ENCODE measurements at regions of chr1 and their contacts with region 1.

Region 1: GRCh38 chr1:12244078-12244477 is 14.2 kb downstream of the VPS13D start:
- DNase-seq: peak; percentile 30
- ATAC-seq: no peak
- H3K4me3 ChIP-seq: no peak overlapping the region
- H3K4me3 Mint-ChIP-seq: no peak overlapping the region
- H3K27ac ChIP-seq: no peak overlapping the region
- H3K27ac Mint-ChIP-seq: no peak overlapping the region
- H3K4me1 ChIP-seq: no peaks in the 10 kb centered on the region
- H3K4me1 Mint-ChIP-seq: no peaks in the 10 kb centered on the region
- H3K27me3 ChIP-seq: no peaks in the 10 kb centered on the region
- H3K27me3 Mint-ChIP-seq: no peaks in the 10 kb centered on the region
- CTCF ChIP-seq: peak; percentile 31

Region 2: DNA sequence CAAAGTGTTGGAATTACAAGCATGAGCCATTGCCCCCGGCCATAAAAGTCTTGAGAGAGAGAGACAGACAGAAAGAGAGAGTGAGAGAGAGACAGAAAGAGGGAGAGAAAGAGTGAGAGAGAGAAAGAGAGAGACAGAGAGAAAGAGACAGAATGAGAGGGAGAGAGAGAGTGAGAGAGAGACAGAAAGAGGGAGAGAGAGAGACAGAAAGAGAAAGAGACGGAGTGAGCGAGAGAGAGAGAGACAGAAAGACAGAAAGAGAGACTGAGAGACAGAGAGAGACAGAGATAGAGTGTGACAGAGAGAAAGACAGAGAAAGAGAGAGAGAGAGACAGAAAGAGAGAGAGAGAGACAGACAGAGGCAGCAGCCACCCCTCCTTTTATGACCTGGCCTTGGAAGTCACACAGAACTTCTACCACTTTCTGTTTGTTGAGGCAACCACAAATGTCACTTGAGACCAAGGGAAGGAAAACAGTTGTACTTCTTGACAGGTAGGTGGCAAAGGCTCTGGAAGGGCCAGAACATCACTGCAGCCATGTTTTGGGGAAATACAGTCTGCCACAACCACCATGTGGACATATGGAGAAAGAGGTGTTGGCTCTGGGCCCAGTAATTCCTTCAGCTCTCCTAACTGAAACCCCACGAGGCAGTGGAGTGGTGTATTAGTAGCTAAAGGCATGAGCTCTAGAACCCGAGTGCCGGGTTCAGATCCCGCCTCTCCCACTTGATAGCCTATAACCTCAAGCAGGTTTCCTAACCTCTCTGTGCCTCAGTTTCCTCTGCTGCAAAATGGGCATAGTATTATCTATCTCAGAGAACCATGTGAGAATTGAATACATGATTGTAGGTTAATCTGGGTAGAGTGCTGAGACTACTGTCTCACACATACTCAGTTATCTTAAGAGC is 130.4 kb before region 1 on chr1:
- CTCF ChIA-PET with region 1: interaction called, 128 read pairs
- POLR2A ChIA-PET with region 1: no interaction called
- intact Hi-C with region 1: loop called (anchors 1 kb)
- DNase-seq: no peak
- ATAC-seq: no peak
- H3K4me3 ChIP-seq: no peak overlapping the region
- H3K4me3 Mint-ChIP-seq: no peak overlapping the region
- H3K27ac ChIP-seq: no peak overlapping the region
- H3K27ac Mint-ChIP-seq: no peak overlapping the region
- H3K4me1 ChIP-seq: no peaks in the 10 kb centered on the region
- H3K4me1 Mint-ChIP-seq: no peaks in the 10 kb centered on the region
- H3K27me3 ChIP-seq: no peaks in the 10 kb centered on the region
- H3K27me3 Mint-ChIP-seq: no peaks in the 10 kb centered on the region
- CTCF ChIP-seq: no peak

Region 3: GRCh38 chr1:12229835-12230548 is 14.1 kb before region 1 on chr1 and contains the start of gene VPS13D:
- CTCF ChIA-PET with region 1: interaction called, 11 read pairs
- POLR2A ChIA-PET with region 1: no interaction called
- intact Hi-C with region 1: no loop called
- DNase-seq: peak; percentile 88
- ATAC-seq: peak; percentile 95
- H3K4me3 ChIP-seq: peak within 1 kb of the TSS; percentile 73 to 98 (median 87)
- H3K4me3 Mint-ChIP-seq: peak within 1 kb of the TSS; percentile 92
- H3K27ac ChIP-seq: peak within 1 kb of the TSS in 1 of 2 donors; percentile 85
- H3K27ac Mint-ChIP-seq: peak within 1 kb of the TSS; percentile 71
- H3K4me1 ChIP-seq: peaks cover 12 to 13% of the 10 kb centered on the region in 2 donors
- H3K4me1 Mint-ChIP-seq: peaks cover 21% of the 10 kb centered on the region
- H3K27me3 ChIP-seq: no peaks in the 10 kb centered on the region
- H3K27me3 Mint-ChIP-seq: peaks cover 3% of the 10 kb centered on the region
- CTCF ChIP-seq: peak; percentile 91
- total RNA-seq, gene VPS13D: 104 and 105 TPM in 2 replicates